Panc1 (cell line): ENCODE measurements at regions of chr18 and their contacts with region 1.

Region 1: GRCh38 chr18:2932247-2933181 is 80.4 kb downstream of the LPIN2 start:
- DNase-seq: peak; percentile 13
- ATAC-seq: peak; percentile 75
- H3K4me3 ChIP-seq: no peak overlapping the region
- H3K27ac ChIP-seq: peak overlapping the region; percentile 58
- H3K4me1 ChIP-seq: 0 out of 2 replicates have a peak, but pooled peaks cover 3% of the 10 kb centered on the region
- H3K27me3 ChIP-seq: no peaks in the 10 kb centered on the region
- CTCF ChIP-seq: peak; percentile 74

Region 2: DNA sequence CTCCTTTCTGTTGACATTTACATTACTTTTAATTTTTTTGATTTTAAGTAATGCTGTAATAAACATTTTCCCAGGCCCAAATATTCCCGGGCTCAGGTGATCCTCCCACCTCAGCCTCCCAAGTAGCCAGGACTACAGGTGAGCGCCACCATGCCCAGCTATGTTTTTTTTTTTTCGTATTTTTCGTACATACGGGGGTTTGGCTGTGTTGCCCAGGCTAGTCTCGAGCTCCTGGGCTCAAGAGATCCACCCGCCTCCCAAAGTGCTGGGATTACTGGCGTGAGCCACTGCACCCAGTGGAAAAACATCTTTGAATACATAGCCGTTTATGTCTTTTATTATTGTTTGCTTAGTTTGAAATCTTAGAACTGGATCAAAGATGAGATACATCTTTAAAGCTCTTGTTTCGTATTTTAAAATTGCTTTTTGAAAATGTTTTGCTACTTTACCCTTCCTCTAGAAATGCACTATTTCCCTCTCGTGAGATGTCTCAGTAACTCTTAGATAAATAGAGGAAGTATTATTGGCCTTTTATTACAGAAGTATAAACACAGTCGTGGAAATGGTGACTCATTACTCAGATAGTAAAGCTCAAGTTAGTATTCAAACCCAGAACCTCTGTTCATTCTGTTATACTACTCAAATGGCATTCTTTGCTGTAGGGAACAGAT is 274.6 kb before region 1 on chr18:
- CTCF ChIA-PET with region 1: no interaction called
- POLR2A ChIA-PET with region 1: no interaction called
- in situ Hi-C with region 1: no loop called
- intact Hi-C with region 1: no loop called
- DNase-seq: no peak
- ATAC-seq: 0 out of 2 replicates have a peak, but pooled peaks have one; percentile 29
- H3K4me3 ChIP-seq: peak overlapping the region; percentile 87 to 94
- H3K27ac ChIP-seq: peak overlapping the region; percentile 68
- H3K4me1 ChIP-seq: peaks cover 21% of the 10 kb centered on the region
- H3K27me3 ChIP-seq: no peaks in the 10 kb centered on the region
- CTCF ChIP-seq: no peak

Region 3: DNA sequence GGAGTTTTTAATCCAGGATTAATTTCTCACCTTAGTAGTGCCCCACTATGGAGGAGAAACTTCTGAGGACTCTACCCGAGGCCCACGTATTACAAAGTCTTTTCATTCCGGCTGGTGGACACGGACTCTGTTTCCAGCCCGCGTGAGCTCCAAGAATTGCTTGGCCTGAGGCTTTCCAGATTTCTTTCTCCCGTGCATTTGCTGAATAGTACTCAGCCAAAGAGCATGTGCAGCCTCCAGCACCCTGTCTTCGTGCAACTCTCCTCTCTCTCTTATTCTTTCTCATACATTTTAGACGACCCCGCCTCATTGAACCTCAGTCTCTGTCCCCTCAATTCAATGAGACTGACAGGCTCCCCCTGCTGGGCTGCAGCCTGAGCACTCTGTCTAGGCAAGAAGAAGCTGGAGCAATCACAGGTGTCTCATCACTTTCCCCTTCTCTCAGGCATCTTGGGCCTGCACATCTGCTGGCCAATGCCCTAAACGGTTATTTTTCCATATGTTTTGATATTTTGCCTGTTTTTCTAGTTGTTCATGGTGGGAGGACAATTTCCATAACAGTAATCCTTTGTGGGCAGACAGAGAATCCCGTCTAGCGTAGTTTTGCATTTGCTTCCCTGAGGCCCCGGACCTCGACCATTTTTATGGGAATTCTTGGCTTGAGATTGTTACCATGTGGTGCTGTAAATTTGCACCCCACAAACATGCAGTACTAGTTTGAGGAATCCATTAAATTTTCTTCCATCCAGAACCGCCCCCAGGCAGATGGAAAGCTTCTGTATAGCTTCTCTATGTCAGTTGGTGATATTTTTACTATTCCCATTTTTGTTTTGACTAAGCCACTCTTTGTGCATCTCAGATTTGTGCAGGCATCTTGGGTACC is 130.5 kb after region 1 on chr18:
- CTCF ChIA-PET with region 1: interaction called, 5 read pairs
- POLR2A ChIA-PET with region 1: no interaction called
- in situ Hi-C with region 1: no loop called
- intact Hi-C with region 1: loop called (anchors 2 kb)
- DNase-seq: peak; percentile 8
- ATAC-seq: peak; percentile 82
- H3K4me3 ChIP-seq: 0 out of 4 replicates have a peak overlapping the region, but pooled peaks of 1 of the 2 experiments have one; percentile 15
- H3K27ac ChIP-seq: peak overlapping the region; percentile 67
- H3K4me1 ChIP-seq: peaks cover 37% of the 10 kb centered on the region
- H3K27me3 ChIP-seq: no peaks in the 10 kb centered on the region
- CTCF ChIP-seq: peak; percentile 92

Region 4: GRCh38 chr18:3151399-3152264 is 219.1 kb after region 1 on chr18:
- CTCF ChIA-PET with region 1: no interaction called
- POLR2A ChIA-PET with region 1: no interaction called
- in situ Hi-C with region 1: no loop called
- intact Hi-C with region 1: loop called (anchors 5 kb)
- DNase-seq: no peak
- ATAC-seq: no peak
- H3K4me3 ChIP-seq: no peak overlapping the region
- H3K27ac ChIP-seq: no peak overlapping the region
- H3K4me1 ChIP-seq: no peaks in the 10 kb centered on the region
- H3K27me3 ChIP-seq: no peaks in the 10 kb centered on the region
- CTCF ChIP-seq: peak; percentile 73

Region 5: GRCh38 chr18:3238742-3239141 is 306.2 kb after region 1 on chr18:
- CTCF ChIA-PET with region 1: interaction called, 11 read pairs
- POLR2A ChIA-PET with region 1: no interaction called
- in situ Hi-C with region 1: no loop called
- intact Hi-C with region 1: no loop called
- DNase-seq: no peak
- ATAC-seq: peak; percentile 79
- H3K4me3 ChIP-seq: no peak overlapping the region
- H3K27ac ChIP-seq: no peak overlapping the region
- H3K4me1 ChIP-seq: no peaks in the 10 kb centered on the region; the same call in 1 of the 2 replicates
- H3K27me3 ChIP-seq: no peaks in the 10 kb centered on the region
- CTCF ChIP-seq: peak; percentile 31; the same call in 1 of the 2 replicates

Region 6: GRCh38 chr18:3245853-3246634 is 313.5 kb after region 1 on chr18:
- CTCF ChIA-PET with region 1: interaction called, 6 read pairs
- POLR2A ChIA-PET with region 1: no interaction called
- in situ Hi-C with region 1: no loop called
- intact Hi-C with region 1: loop called (anchors 1 kb)
- DNase-seq: no peak
- ATAC-seq: peak; percentile 75
- H3K4me3 ChIP-seq: peak overlapping the region; percentile 91 to 98
- H3K27ac ChIP-seq: peak overlapping the region; percentile 100
- H3K4me1 ChIP-seq: peaks cover 16% of the 10 kb centered on the region
- H3K27me3 ChIP-seq: no peaks in the 10 kb centered on the region
- CTCF ChIP-seq: peak; percentile 97

Region 7: DNA sequence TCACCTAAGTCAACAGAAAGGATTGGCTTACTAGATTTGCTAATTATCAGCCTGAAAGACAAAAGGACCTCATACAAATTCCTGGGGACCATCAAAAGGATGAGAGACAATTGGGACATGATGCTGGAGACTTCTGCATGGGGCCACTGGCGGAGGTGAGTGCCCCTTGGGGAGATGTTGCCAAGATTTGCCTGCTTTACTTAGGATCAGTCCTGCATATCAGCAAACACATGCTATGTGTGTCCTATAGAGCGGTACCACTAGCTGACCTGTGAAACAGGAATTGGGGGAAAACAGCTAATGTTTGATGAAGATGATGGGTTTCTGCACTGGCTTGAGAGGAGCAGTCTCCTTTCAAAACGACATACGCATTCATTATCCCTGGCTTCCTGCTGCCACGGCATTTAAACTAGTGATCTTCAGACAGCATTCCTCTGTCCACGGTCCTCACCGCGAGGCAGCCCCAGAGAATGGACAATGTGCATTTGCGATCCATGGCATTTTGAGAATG is 621.6 kb after region 1 on chr18:
- CTCF ChIA-PET with region 1: no interaction called
- POLR2A ChIA-PET with region 1: no interaction called
- in situ Hi-C with region 1: no loop called
- intact Hi-C with region 1: no loop called
- DNase-seq: no peak
- ATAC-seq: no peak
- H3K4me3 ChIP-seq: no peak overlapping the region
- H3K27ac ChIP-seq: peak overlapping the region; percentile 57; the same call in 1 of the 2 replicates
- H3K4me1 ChIP-seq: no peaks in the 10 kb centered on the region; the same call in 1 of the 2 replicates
- H3K27me3 ChIP-seq: no peaks in the 10 kb centered on the region
- CTCF ChIP-seq: no peak